ENCODE measurements at regions of chr1 and their contacts with region 1.

Region 1: GRCh38 chr1:222792744-222793143 is 22.1 kb upstream of the DISP1 start:
- DNase-seq: peak in 6 of 9 donors; percentile 7 to 44 (median 27)
- ATAC-seq: no peak
- H3K4me3 ChIP-seq: no peak overlapping the region
- H3K4me3 Mint-ChIP-seq: no peak overlapping the region
- H3K27ac ChIP-seq: no peak overlapping the region
- H3K27ac Mint-ChIP-seq: no peak overlapping the region
- H3K4me1 ChIP-seq: no peaks in the 10 kb centered on the region
- H3K4me1 Mint-ChIP-seq: peaks cover 0 to 17% (median 0%) of the 10 kb centered on the region in 7 donors
- H3K27me3 ChIP-seq: no peaks in the 10 kb centered on the region
- H3K27me3 Mint-ChIP-seq: peaks cover 0 to 2% (median 0%) of the 10 kb centered on the region in 5 donors

Region 2: DNA sequence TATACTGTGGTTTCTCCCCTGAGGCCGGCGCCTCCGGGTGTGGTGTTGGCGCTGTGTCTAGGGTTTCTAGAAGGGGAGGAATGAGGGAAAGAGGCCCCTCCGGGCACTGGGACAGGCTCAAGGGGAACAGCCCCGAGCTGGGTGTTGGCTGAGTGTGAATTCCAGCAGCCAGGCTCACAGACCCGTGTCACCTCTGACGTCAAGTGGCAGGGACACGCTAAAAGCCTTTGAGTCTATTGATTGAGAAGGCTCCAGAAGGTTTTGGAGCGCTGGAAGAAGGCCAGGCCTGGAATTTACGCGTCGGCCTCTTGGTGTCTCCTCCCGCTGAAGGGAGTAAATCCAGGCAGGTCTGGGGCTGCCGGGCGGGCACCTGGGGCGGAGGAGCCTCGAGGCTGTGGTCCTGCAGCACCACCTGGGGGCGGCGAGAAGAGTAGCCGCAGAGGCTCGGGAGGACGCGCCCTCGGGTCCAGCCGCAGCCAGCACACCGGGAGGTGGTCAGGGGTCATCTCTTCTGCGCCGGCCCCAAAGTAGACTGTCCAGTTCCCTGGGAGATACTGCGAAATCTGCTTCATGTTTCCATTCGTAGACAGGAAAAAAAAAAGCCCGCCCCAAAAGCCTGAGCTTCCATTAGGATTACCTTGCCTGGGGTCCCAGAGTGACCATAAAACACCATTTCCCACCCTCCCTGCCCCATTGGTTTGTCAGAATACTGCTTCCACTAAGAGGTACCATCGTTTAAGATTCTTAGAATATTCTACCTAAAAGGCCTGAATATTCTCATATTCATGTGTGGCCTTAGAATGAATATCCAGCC is 288.6 kb after region 1 on chr1:
- CTCF ChIA-PET with region 1: no interaction called
- POLR2A ChIA-PET with region 1: no interaction called
- intact Hi-C with region 1: loop called (anchors 1 kb)
- DNase-seq: peak; percentile 54 to 79 (median 65)
- ATAC-seq: peak; percentile 90
- H3K4me3 ChIP-seq: peak overlapping the region; percentile 57
- H3K4me3 Mint-ChIP-seq: peak overlapping the region; percentile 34 to 77 (median 58)
- H3K27ac ChIP-seq: peak overlapping the region; percentile 39
- H3K27ac Mint-ChIP-seq: peak overlapping the region in 1 of 9 donors; percentile 51
- H3K4me1 ChIP-seq: no peaks in the 10 kb centered on the region
- H3K4me1 Mint-ChIP-seq: no peaks in the 10 kb centered on the region
- H3K27me3 ChIP-seq: no peaks in the 10 kb centered on the region
- H3K27me3 Mint-ChIP-seq: peaks cover 2 to 9% (median 4%) of the 10 kb centered on the region in 5 donors

Region 3: DNA sequence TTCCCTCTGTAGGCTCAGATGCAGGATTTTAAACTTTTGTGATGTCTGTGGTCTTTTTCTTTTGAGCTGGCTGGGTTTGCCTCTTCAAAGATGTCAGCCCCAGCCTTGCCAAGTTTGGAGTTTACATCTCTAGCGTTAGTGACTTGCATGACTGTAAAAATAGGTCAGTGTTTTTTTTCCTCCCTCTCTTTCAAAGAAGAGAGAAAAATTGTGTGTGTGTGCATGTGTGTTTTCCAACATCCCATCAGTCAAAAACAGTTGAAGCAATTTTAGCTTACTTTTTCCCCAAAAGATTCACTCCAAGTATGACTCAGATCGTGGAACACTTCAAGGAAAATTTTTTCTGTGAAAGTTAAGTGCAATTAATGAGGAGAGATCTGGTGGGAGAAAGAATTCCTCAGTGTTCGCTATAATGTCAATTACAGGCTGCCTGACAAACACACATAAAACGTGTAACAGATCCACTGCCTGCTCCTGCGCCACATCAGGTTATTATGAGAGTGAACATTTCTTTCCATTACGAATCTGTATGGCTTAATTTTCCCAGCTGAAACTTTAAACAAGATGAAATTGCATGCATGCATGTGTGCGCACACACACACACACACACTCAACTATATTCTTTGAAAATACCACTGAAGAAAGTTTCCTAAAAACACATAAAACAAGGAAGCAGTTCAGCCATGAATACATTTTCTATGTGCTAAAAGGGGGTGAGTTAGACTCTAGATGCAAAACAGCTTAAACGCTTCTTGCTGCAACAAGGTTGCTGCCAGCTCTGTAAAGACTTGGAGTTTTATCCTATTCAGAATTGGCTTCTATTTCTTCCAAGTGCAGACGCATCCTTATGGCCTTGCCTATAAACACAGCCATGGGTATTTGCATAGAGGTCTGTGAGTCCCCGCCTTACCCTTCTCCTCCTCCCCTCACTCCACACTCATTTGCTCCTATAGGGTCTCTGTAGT is 294.8 kb after region 1 on chr1:
- CTCF ChIA-PET with region 1: interaction called, 6 read pairs
- POLR2A ChIA-PET with region 1: no interaction called
- intact Hi-C with region 1: loop called in 1 of 2 experiments (anchors 1 kb)
- DNase-seq: no peak
- ATAC-seq: no peak
- H3K4me3 ChIP-seq: no peak overlapping the region
- H3K4me3 Mint-ChIP-seq: peak overlapping the region in 1 of 10 donors; percentile 35
- H3K27ac ChIP-seq: no peak overlapping the region
- H3K27ac Mint-ChIP-seq: peak overlapping the region in 5 of 9 donors; percentile 33 to 78 (median 52)
- H3K4me1 ChIP-seq: no peaks in the 10 kb centered on the region
- H3K4me1 Mint-ChIP-seq: peaks cover 2 to 12% (median 10%) of the 10 kb centered on the region in 7 donors
- H3K27me3 ChIP-seq: no peaks in the 10 kb centered on the region
- H3K27me3 Mint-ChIP-seq: no peaks in the 10 kb centered on the region

Region 4: DNA sequence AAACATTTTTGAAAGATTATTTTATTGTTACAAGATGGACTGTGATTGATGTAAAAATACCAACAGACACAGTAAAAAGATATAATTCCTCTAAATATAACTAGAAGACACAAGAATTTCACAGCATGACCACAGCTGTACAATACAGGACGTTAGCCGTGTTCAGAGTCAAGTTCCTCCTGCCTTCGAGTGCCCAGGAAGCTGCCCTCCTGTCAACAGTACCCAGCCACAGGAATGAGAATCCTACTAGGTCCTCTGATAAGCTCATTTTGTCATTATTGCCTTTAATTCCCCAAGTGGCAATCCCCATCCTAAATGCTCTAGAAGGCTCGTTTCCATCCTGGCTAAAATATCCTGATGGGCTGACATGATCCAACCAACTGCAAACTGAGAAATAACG is 903.2 kb after region 1 on chr1:
- CTCF ChIA-PET with region 1: no interaction called
- POLR2A ChIA-PET with region 1: no interaction called
- intact Hi-C with region 1: loop called in 1 of 2 experiments (anchors 5 kb)
- DNase-seq: no peak
- ATAC-seq: no peak
- H3K4me3 ChIP-seq: no peak overlapping the region
- H3K4me3 Mint-ChIP-seq: no peak overlapping the region
- H3K27ac ChIP-seq: no peak overlapping the region
- H3K27ac Mint-ChIP-seq: no peak overlapping the region
- H3K4me1 ChIP-seq: no peaks in the 10 kb centered on the region
- H3K4me1 Mint-ChIP-seq: peaks cover 0 to 11% (median 6%) of the 10 kb centered on the region in 7 donors
- H3K27me3 ChIP-seq: no peaks in the 10 kb centered on the region
- H3K27me3 Mint-ChIP-seq: peaks cover 0 to 5% (median 0%) of the 10 kb centered on the region in 5 donors